Activated naive CD4-positive, alpha-beta T cell treated with anti-CD3 and anti-CD28 coated beads for 36 hours (primary cell): ENCODE measurements at regions of chr1 and their contacts with region 1.

Region 1: GRCh38 chr1:110460253-110461220 is 9.6 kb downstream of the PROK1 start:
- DNase-seq: peak; percentile 93
- H3K4me3 Mint-ChIP-seq: no peak overlapping the region
- H3K27ac Mint-ChIP-seq: no peak overlapping the region
- H3K4me1 Mint-ChIP-seq: no peaks in the 10 kb centered on the region
- H3K27me3 Mint-ChIP-seq: no peaks in the 10 kb centered on the region

Region 2: GRCh38 chr1:110196917-110197765 is 263.4 kb before region 1 on chr1:
- CTCF ChIA-PET with region 1: interaction called, 106 read pairs
- intact Hi-C with region 1: loop called (anchors 5 kb)
- DNase-seq: peak; percentile 65
- H3K4me3 Mint-ChIP-seq: no peak overlapping the region
- H3K27ac Mint-ChIP-seq: no peak overlapping the region
- H3K4me1 Mint-ChIP-seq: no peaks in the 10 kb centered on the region
- H3K27me3 Mint-ChIP-seq: no peaks in the 10 kb centered on the region

Region 3: DNA sequence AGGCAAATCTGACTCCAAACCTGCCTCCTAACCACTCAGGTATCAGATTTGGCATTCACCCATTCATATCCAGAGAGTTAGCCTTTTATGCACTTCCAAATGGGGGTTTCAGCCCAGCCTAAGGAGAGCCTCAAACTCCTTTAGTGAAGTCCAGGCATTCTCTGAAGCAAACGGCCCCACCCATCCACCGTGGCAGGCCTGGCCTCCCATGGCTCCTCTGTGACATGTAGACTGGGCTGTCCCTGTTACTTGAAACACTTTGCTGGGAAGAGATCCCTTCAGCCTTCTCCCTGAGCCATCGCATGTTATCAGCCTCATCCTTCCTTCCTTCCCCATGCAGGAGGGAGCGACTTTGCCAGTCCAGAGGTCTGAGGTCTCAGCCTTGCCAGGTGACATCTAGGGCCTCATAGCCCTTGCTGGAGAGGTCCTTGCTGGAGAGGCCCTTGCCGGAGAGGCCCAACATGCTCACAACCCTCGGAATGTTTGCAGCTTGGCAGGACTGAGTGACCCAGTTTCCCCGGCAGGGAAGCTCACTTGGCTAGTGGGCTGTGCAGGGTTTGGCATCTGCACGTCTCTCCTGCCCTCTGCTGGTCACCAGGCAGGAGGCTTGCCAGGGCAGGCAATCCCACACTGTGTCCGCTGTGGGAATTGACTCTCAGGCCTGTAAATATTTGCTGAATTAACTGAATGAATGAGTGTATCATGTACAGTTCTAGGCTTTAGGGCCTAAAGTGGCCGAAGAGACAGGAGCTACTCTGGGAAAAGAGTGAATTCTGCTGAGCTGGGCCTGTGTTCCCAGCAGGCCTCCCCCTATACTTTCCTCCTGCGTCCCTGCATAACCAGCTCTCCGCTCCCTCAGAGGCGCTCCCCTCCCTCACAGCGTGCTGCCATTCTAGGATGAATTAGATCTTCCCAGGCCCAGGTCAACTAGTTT is 148.1 kb before region 1 on chr1:
- CTCF ChIA-PET with region 1: interaction called, 29 read pairs
- intact Hi-C with region 1: loop called (anchors 5 kb)
- DNase-seq: peak; percentile 81
- H3K4me3 Mint-ChIP-seq: no peak overlapping the region
- H3K27ac Mint-ChIP-seq: no peak overlapping the region
- H3K4me1 Mint-ChIP-seq: no peaks in the 10 kb centered on the region
- H3K27me3 Mint-ChIP-seq: no peaks in the 10 kb centered on the region

Region 4: GRCh38 chr1:110412576-110412975 is 48.0 kb before region 1 on chr1:
- CTCF ChIA-PET with region 1: interaction called, 51 read pairs
- intact Hi-C with region 1: loop called (anchors 5 kb)
- DNase-seq: peak; percentile 70
- H3K4me3 Mint-ChIP-seq: no peak overlapping the region
- H3K27ac Mint-ChIP-seq: no peak overlapping the region
- H3K4me1 Mint-ChIP-seq: peaks cover 7% of the 10 kb centered on the region
- H3K27me3 Mint-ChIP-seq: no peaks in the 10 kb centered on the region

Region 5: GRCh38 chr1:110477041-110477440 is 16.5 kb after region 1 on chr1:
- CTCF ChIA-PET with region 1: interaction called, 16 read pairs
- intact Hi-C with region 1: no loop called
- DNase-seq: no peak
- H3K4me3 Mint-ChIP-seq: no peak overlapping the region
- H3K27ac Mint-ChIP-seq: no peak overlapping the region
- H3K4me1 Mint-ChIP-seq: peaks cover 10% of the 10 kb centered on the region
- H3K27me3 Mint-ChIP-seq: peaks cover 3% of the 10 kb centered on the region

Region 6: DNA sequence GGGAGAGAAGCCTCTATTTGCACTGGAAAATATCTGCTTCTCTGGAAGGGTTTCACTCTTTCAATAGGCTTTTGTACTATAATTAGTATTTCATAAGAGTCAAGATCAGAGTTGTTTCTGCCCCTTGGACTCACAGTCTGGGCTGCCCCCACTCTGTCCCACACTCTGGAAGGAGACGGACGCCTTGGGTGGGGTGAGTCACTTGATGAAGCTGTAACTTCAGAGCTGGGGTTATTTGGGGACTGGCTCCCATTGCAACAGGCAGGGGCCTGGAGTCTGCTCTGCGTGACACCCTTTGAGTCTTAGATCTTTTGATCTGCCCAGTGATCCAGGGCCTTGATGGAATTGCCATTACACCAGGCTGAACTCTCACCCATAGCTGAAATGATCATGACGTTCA is 62.5 kb after region 1 on chr1:
- CTCF ChIA-PET with region 1: no interaction called
- intact Hi-C with region 1: no loop called
- DNase-seq: no peak
- H3K4me3 Mint-ChIP-seq: no peak overlapping the region
- H3K27ac Mint-ChIP-seq: no peak overlapping the region
- H3K4me1 Mint-ChIP-seq: no peaks in the 10 kb centered on the region
- H3K27me3 Mint-ChIP-seq: peaks cover 15% of the 10 kb centered on the region

Region 7: GRCh38 chr1:110554871-110555801 is 94.6 kb after region 1 on chr1:
- CTCF ChIA-PET with region 1: no interaction called
- intact Hi-C with region 1: no loop called
- DNase-seq: peak; percentile 55
- H3K4me3 Mint-ChIP-seq: peak overlapping the region; percentile 22
- H3K27ac Mint-ChIP-seq: no peak overlapping the region
- H3K4me1 Mint-ChIP-seq: peaks cover 3% of the 10 kb centered on the region
- H3K27me3 Mint-ChIP-seq: peaks cover 41% of the 10 kb centered on the region

Region 8: GRCh38 chr1:110726755-110727154 is 266.2 kb after region 1 on chr1:
- CTCF ChIA-PET with region 1: no interaction called
- intact Hi-C with region 1: no loop called
- DNase-seq: no peak
- H3K4me3 Mint-ChIP-seq: no peak overlapping the region
- H3K27ac Mint-ChIP-seq: peak overlapping the region; percentile 22
- H3K4me1 Mint-ChIP-seq: peaks cover 31% of the 10 kb centered on the region
- H3K27me3 Mint-ChIP-seq: no peaks in the 10 kb centered on the region